Colonic mucosa (tissue), 4 donors: ENCODE measurements at regions of chr1 and their contacts with region 1.

Region 1: GRCh38 chr1:243343970-243344937 is 88.4 kb downstream of the SDCCAG8 start:
- DNase-seq: no peak
- H3K4me3 ChIP-seq: no peak overlapping the region
- H3K27ac ChIP-seq: no peak overlapping the region
- H3K4me1 ChIP-seq: no peaks in the 10 kb centered on the region
- H3K27me3 ChIP-seq: no peaks in the 10 kb centered on the region
- CTCF ChIP-seq: peak; percentile 52

Region 2: DNA sequence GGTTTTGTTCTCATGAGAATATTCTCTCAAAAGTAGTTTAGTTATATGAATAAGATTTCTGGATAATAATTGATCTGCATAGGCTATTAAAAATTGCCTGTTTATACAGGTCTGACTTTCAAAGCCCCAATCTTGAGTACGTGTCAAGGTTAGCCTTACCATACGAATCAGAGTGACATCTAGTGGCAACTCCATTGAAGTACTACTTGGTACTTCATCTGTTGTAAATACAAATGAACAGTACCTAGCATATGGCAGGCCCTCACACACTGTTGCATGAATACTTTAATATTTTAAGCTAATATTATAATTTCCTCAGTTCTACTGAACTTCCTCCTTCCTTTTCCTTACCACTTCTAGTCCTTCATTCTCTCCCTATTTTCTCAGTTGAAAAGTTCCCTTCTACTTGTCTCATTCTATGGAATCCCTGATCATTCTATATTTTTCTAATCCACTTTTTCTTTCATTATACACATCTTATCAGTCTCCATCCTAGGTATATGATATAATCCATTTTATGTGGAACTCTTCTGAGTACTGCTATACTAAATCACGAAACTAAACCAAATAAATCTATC is 404.5 kb after region 1 on chr1:
- intact Hi-C with region 1: loop called (anchors 2 kb)
- DNase-seq: no peak
- H3K4me3 ChIP-seq: no peak overlapping the region
- H3K27ac ChIP-seq: no peak overlapping the region
- H3K4me1 ChIP-seq: no peaks in the 10 kb centered on the region
- H3K27me3 ChIP-seq: no peaks in the 10 kb centered on the region
- CTCF ChIP-seq: peak; percentile 72

Region 3: DNA sequence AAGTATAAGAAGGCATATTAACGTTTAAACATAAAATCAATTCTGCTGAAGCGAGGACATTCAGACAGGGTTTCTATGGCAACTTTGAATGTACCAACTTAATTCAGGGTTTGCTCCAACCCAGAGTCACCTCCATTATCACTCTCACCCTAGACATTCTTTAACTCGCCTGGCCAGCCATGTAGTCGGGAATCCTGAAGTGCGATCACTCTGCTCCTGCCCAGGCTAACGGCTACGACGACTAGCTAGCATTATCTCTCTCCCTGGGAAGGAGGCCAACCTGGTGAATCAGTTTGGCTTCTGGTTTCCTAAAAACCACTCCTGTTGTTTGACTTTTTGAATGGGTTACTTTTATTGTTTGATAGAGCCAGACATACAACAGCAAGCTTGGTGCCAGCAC is 667.9 kb after region 1 on chr1:
- intact Hi-C with region 1: loop called (anchors 10 kb)
- DNase-seq: no peak
- H3K4me3 ChIP-seq: no peak overlapping the region
- H3K27ac ChIP-seq: no peak overlapping the region
- H3K4me1 ChIP-seq: no peaks in the 10 kb centered on the region
- H3K27me3 ChIP-seq: no peaks in the 10 kb centered on the region
- CTCF ChIP-seq: no peak

Region 4: DNA sequence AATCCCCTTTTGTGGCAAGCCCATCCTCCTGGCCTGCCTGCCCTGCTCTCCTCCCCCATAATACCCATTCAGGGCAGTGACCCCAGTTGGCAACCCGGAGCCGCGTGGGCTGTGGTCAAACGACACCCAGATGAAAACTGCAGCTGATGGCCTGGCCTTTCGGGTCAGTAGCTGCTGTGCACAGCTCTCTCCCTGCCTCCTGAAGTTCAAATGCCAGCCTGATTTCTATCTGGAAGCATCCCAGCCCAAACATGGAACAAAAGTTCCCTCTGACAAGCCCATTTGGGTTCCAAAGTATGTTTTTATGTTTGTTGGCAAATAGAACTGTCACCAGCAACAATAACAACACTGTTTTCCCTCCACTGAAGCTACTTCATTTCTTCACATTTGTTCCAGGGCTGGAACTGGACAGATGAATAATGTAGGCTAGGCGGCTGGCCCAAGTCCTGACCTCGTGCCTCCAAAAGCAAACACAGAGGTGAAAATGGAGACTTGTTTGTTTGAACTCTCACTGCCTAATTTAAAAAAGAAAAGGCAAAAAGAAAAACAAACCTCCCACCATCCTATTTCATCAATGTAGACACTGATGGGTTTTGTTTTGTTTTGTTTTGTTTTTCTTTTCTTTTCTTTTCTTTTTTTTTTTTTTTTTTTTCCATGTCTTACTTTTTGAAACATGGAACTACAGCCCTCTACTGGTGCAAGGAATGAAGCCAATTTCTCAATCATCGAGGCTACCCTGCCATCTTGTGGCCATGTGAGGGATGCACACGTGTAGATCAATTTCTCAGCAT is 928.4 kb after region 1 on chr1:
- intact Hi-C with region 1: loop called (anchors 5 kb)
- DNase-seq: peak; percentile 70
- H3K4me3 ChIP-seq: no peak overlapping the region
- H3K27ac ChIP-seq: no peak overlapping the region
- H3K4me1 ChIP-seq: no peaks in the 10 kb centered on the region
- H3K27me3 ChIP-seq: no peaks in the 10 kb centered on the region
- CTCF ChIP-seq: peak; percentile 96